ENCODE measurements at regions of chr13 and their contacts with region 1.

Region 1: GRCh38 chr13:32409561-32410421 is 18.1 kb downstream of the N4BP2L1 start:
- DNase-seq: peak in 1 of 2 experiments; percentile 69
- H3K4me3 ChIP-seq: peak overlapping the region; percentile 51 to 70 (median 59)
- H3K27ac ChIP-seq: no peak overlapping the region
- H3K4me1 ChIP-seq: peaks cover 0 to 7% (median 5%) of the 10 kb centered on the region in 4 experiments; a peak in 5 of 7 replicates
- H3K27me3 ChIP-seq: peaks cover 0 to 3% (median 0%) of the 10 kb centered on the region in 4 experiments; a peak in 6 of 7 replicates
- CTCF ChIP-seq: no peak
- EP300 ChIP-seq: no peak
- POLR2A ChIP-seq: peak in 1 of 2 experiments; percentile 71; a peak in 2 of 3 replicates
- RAD21 ChIP-seq: no peak; a peak in 1 of 4 replicates

Region 2: GRCh38 chr13:32397896-32398295 is 11.9 kb before region 1 on chr13:
- CTCF ChIA-PET with region 1: interaction called, 14 read pairs
- POLR2A ChIA-PET with region 1: interaction called, 12 read pairs
- DNase-seq: no peak
- H3K4me3 ChIP-seq: no peak overlapping the region
- H3K27ac ChIP-seq: no peak overlapping the region
- H3K4me1 ChIP-seq: no peaks in the 10 kb centered on the region
- H3K27me3 ChIP-seq: no peaks in the 10 kb centered on the region
- CTCF ChIP-seq: no peak
- EP300 ChIP-seq: no peak
- POLR2A ChIP-seq: no peak
- RAD21 ChIP-seq: no peak

Region 3: GRCh38 chr13:32423592-32423991 is 13.8 kb after region 1 on chr13:
- CTCF ChIA-PET with region 1: interaction called, 8 read pairs
- POLR2A ChIA-PET with region 1: interaction called, 15 read pairs
- DNase-seq: no peak
- H3K4me3 ChIP-seq: no peak overlapping the region
- H3K27ac ChIP-seq: no peak overlapping the region
- H3K4me1 ChIP-seq: peaks cover 4% of the 10 kb centered on the region in 4 experiments; a peak in 6 of 7 replicates
- H3K27me3 ChIP-seq: peaks cover 0 to 10% (median 6%) of the 10 kb centered on the region in 4 experiments; a peak in 5 of 7 replicates
- CTCF ChIP-seq: no peak
- EP300 ChIP-seq: no peak
- POLR2A ChIP-seq: no peak
- RAD21 ChIP-seq: no peak

Measured in H1 (cell line).